ENCODE measurements at regions of chr10 and their contacts with region 1.

Region 1: GRCh38 chr10:60312818-60313588 is 76.7 kb downstream of the ANK3 start:
- DNase-seq: no peak
- ATAC-seq: no peak
- H3K4me3 ChIP-seq: no peak overlapping the region
- H3K27ac ChIP-seq: no peak overlapping the region
- H3K4me1 ChIP-seq: no peaks in the 10 kb centered on the region
- H3K27me3 ChIP-seq: no peaks in the 10 kb centered on the region

Region 2: DNA sequence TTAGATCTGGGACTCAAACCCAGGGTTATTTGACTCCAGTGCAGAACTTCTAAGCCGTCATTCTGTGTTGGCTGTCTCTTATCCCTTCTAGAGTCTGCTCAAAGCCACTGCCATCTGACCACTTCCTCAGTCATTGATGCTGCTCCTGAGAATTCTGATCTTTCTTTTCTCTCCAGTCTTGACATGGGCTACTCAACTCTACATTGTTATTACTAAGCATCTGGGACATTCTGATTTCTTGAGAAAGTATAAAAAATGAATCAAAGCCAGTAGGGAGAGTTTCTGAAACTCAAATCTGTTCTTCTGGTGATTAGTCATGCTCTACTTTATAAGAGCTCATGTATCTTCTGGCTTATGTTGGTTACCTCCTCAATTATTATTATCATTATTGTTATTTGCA is 28.0 kb after region 1 on chr10:
- intact Hi-C with region 1: loop called in 1 of 2 experiments (anchors 2 kb)
- DNase-seq: no peak
- ATAC-seq: no peak
- H3K4me3 ChIP-seq: no peak overlapping the region
- H3K27ac ChIP-seq: no peak overlapping the region
- H3K4me1 ChIP-seq: no peaks in the 10 kb centered on the region
- H3K27me3 ChIP-seq: no peaks in the 10 kb centered on the region

Region 3: DNA sequence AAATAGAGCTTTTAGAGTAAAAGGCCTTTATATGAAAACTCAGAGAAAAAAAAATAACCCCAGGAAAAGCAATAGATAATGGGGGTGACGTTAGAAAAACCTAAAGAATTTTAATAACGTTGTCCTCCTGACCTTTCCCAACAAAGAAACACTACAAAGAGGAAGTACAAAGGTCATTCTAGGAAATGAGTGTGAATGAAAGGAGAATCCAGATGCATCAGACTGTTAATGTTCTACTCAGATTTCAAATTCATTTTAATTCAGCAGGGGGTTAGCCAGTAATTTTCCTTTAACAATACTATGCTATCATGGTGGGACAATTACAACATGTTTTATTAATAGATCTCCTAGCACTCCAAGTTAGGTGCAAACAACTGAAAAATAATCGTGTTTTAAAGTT is 391.5 kb after region 1 on chr10:
- intact Hi-C with region 1: no loop called
- DNase-seq: no peak
- ATAC-seq: no peak
- H3K4me3 ChIP-seq: no peak overlapping the region
- H3K27ac ChIP-seq: no peak overlapping the region
- H3K4me1 ChIP-seq: no peaks in the 10 kb centered on the region
- H3K27me3 ChIP-seq: no peaks in the 10 kb centered on the region